ENCODE measurements at regions of chr22 and their contacts with region 1.

Region 1: DNA sequence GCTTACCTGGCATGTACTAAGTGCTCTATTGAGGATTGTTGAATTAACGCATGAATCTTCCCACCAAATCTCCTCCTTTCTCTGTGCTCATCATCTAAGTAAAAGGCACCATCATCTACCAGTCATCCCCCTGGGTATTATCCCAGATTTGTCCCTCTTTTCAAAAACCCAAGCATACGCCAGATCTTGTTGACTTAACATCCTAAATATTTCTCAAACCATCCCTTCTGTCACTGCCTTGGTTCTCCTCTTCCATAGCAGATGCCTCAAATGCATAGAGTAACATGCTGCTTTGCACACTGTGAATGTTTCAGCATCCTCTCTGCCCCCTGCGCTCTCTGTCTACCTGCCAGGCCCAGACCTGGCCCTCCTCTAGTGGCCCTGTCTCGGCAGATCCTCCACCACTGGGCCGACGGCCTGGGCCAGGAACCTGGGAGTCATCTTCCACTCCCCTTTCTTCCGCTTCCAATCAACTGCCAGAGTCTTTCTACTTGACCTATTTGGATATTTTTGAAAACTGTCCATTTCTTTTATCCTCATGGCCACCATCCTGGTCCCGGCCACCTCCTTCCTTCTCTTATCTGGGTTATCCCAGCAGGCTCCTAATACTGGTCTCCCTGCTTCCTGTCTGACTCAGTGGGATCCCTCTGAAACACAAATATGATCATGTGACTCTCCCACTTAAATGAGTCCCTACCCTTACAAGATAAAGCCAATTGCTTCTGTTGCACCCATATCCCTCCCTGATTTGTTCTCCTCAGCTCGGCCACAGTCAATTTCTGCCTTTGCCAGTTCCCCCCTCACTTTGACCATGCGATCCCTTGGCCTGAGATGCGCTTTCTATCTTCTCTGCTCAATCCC is 3.4 kb upstream of the TAB1 start:
- DNase-seq: no peak
- H3K4me3 ChIP-seq: no peak overlapping the region
- H3K4me3 Mint-ChIP-seq: peak overlapping the region in 2 of 7 donors; percentile 44 to 69
- H3K27ac ChIP-seq: no peak overlapping the region
- H3K27ac Mint-ChIP-seq: peak overlapping the region in 1 of 8 donors; percentile 32
- H3K4me1 ChIP-seq: peaks cover 11% of the 10 kb centered on the region
- H3K4me1 Mint-ChIP-seq: peaks cover 8 to 18% (median 13%) of the 10 kb centered on the region in 3 donors
- H3K27me3 ChIP-seq: no peaks in the 10 kb centered on the region
- H3K27me3 Mint-ChIP-seq: peaks cover 0 to 2% of the 10 kb centered on the region in 2 donors

Region 2: DNA sequence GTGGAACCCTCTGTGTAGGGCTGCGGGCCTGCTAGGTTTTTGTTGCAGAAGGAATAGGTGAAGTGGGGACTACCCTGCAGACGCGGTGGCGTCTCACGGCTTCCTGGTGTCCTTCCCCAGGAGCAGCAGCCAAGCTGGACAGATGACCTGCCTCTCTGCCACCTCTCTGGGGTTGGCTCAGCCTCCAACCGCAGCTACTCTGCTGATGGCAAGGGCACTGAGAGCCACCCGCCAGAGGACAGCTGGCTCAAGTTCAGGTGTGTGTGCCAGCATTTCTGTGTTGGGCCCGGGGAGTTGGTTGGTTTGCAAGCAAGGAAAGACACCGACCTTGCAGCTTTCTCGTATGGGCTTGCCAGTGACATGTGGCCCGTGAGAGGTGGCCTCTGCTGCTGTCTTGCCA is 18.7 kb after region 1 on chr22:
- CTCF ChIA-PET with region 1: interaction called, 35 read pairs
- POLR2A ChIA-PET with region 1: interaction called, 10 read pairs
- DNase-seq: no peak
- H3K4me3 ChIP-seq: no peak overlapping the region
- H3K4me3 Mint-ChIP-seq: peak overlapping the region in 1 of 7 donors; percentile 19
- H3K27ac ChIP-seq: no peak overlapping the region
- H3K27ac Mint-ChIP-seq: no peak overlapping the region
- H3K4me1 ChIP-seq: peaks cover 62% of the 10 kb centered on the region
- H3K4me1 Mint-ChIP-seq: peaks cover 28 to 43% (median 36%) of the 10 kb centered on the region in 3 donors
- H3K27me3 ChIP-seq: no peaks in the 10 kb centered on the region
- H3K27me3 Mint-ChIP-seq: no peaks in the 10 kb centered on the region

Region 3: GRCh38 chr22:39428578-39429071 is 32.5 kb after region 1 on chr22:
- CTCF ChIA-PET with region 1: no interaction called
- POLR2A ChIA-PET with region 1: no interaction called
- DNase-seq: peak in 1 of 5 donors; percentile 25
- H3K4me3 ChIP-seq: no peak overlapping the region
- H3K4me3 Mint-ChIP-seq: no peak overlapping the region
- H3K27ac ChIP-seq: no peak overlapping the region
- H3K27ac Mint-ChIP-seq: no peak overlapping the region
- H3K4me1 ChIP-seq: no peaks in the 10 kb centered on the region
- H3K4me1 Mint-ChIP-seq: no peaks in the 10 kb centered on the region
- H3K27me3 ChIP-seq: no peaks in the 10 kb centered on the region
- H3K27me3 Mint-ChIP-seq: no peaks in the 10 kb centered on the region

Region 4: DNA sequence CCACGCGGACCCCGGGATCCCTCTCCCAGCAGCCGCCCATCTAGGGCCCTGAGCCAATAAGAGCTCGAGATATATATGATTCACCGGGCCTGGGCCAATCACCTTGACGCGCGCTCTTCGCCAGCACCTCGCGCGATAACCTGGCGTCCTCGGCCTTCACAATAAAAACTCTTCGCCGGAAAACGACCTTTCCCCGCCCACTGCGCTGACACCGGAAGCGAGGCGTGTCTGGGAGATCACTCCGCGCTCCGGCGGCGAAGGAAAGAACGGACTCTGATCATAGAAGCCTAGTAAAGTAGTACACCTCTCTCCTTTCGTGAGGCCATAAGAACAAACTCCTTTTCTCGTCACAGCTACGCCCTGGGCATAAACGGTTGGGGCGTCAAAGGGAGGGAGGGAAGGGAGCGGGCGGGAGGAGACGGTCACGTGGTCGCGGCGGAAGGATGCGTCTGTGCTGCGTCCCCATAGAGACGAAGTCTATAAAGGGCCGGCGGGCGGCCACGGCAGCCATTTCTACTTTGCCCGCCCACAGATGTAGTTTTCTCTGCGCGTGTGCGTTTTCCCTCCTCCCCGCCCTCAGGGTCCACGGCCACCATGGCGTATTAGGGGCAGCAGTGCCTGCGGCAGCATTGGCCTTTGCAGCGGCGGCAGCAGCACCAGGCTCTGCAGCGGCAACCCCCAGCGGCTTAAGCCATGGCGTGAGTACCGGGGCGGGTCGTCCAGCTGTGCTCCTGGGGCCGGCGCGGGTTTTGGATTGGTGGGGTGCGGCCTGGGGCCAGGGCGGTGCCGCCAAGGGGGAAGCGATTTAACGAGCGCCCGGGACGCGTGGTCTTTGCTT is 124.1 kb after region 1 on chr22 and contains the start of gene ATF4:
- CTCF ChIA-PET with region 1: interaction called, 7 read pairs
- POLR2A ChIA-PET with region 1: interaction called, 11 read pairs
- DNase-seq: peak; percentile 94 to 99 (median 96)
- H3K4me3 ChIP-seq: peak within 1 kb of the TSS; percentile 90
- H3K4me3 Mint-ChIP-seq: peak within 1 kb of the TSS; percentile 89 to 99 (median 96)
- H3K27ac ChIP-seq: peak within 1 kb of the TSS; percentile 80
- H3K27ac Mint-ChIP-seq: peak within 1 kb of the TSS; percentile 95 to 100 (median 98)
- H3K4me1 ChIP-seq: peaks cover 39% of the 10 kb centered on the region
- H3K4me1 Mint-ChIP-seq: peaks cover 47 to 56% (median 51%) of the 10 kb centered on the region in 3 donors
- H3K27me3 ChIP-seq: no peaks in the 10 kb centered on the region
- H3K27me3 Mint-ChIP-seq: peaks cover 0 to 14% of the 10 kb centered on the region in 2 donors
- total RNA-seq, gene ATF4: 757 to 758 TPM

Measured in CD8-positive, alpha-beta memory T cell (primary cell).